CD4-positive, alpha-beta memory T cell (primary cell): ENCODE measurements at regions of chr16 and their contacts with region 1.

Region 1: GRCh38 chr16:4475880-4476788 is at the start of gene HMOX2:
- DNase-seq: peak; percentile 90 to 95 (median 92)
- H3K4me3 ChIP-seq: peak within 1 kb of the TSS; percentile 86 to 91
- H3K4me3 Mint-ChIP-seq: peak within 1 kb of the TSS; percentile 92 to 95 (median 94)
- H3K27ac ChIP-seq: peak within 1 kb of the TSS; percentile 76
- H3K27ac Mint-ChIP-seq: peak within 1 kb of the TSS; percentile 90 to 96 (median 95)
- H3K4me1 ChIP-seq: peaks cover 60% of the 10 kb centered on the region
- H3K4me1 Mint-ChIP-seq: peaks cover 26 to 55% (median 38%) of the 10 kb centered on the region in 4 donors
- H3K27me3 ChIP-seq: no peaks in the 10 kb centered on the region
- H3K27me3 Mint-ChIP-seq: no peaks in the 10 kb centered on the region
- total RNA-seq, gene HMOX2: 64.1 to 72.4 TPM

Region 2: GRCh38 chr16:4360538-4361021 is 115.6 kb before region 1 on chr16:
- CTCF ChIA-PET with region 1: no interaction called
- POLR2A ChIA-PET with region 1: no interaction called
- intact Hi-C with region 1: no loop called
- DNase-seq: peak in 1 of 5 donors; percentile 62
- H3K4me3 ChIP-seq: no peak overlapping the region
- H3K4me3 Mint-ChIP-seq: no peak overlapping the region
- H3K27ac ChIP-seq: no peak overlapping the region
- H3K27ac Mint-ChIP-seq: peak overlapping the region in 3 of 7 donors; percentile 6 to 68 (median 36)
- H3K4me1 ChIP-seq: no peaks in the 10 kb centered on the region
- H3K4me1 Mint-ChIP-seq: peaks cover 0 to 3% (median 0%) of the 10 kb centered on the region in 4 donors
- H3K27me3 ChIP-seq: no peaks in the 10 kb centered on the region
- H3K27me3 Mint-ChIP-seq: no peaks in the 10 kb centered on the region

Region 3: GRCh38 chr16:4416200-4417032 is 59.7 kb before region 1 on chr16 and contains the start of gene CORO7:
- CTCF ChIA-PET with region 1: interaction called, 3 read pairs
- POLR2A ChIA-PET with region 1: interaction called, 54 read pairs
- intact Hi-C with region 1: loop called (anchors 1 kb)
- DNase-seq: peak; percentile 99 to 100 (median 100)
- H3K4me3 ChIP-seq: peak within 1 kb of the TSS; percentile 75 to 81
- H3K4me3 Mint-ChIP-seq: peak within 1 kb of the TSS; percentile 91 to 99 (median 98)
- H3K27ac ChIP-seq: peak within 1 kb of the TSS; percentile 95
- H3K27ac Mint-ChIP-seq: peak within 1 kb of the TSS; percentile 94 to 100 (median 99)
- H3K4me1 ChIP-seq: peaks cover 38% of the 10 kb centered on the region
- H3K4me1 Mint-ChIP-seq: peaks cover 26 to 49% (median 37%) of the 10 kb centered on the region in 4 donors
- H3K27me3 ChIP-seq: no peaks in the 10 kb centered on the region
- H3K27me3 Mint-ChIP-seq: no peaks in the 10 kb centered on the region
- total RNA-seq, gene CORO7: 176 to 184 TPM

Region 4: GRCh38 chr16:4461250-4462085 is 14.7 kb before region 1 on chr16:
- CTCF ChIA-PET with region 1: interaction called, 9 read pairs
- POLR2A ChIA-PET with region 1: interaction called, 78 read pairs
- intact Hi-C with region 1: no loop called
- DNase-seq: no peak
- H3K4me3 ChIP-seq: no peak overlapping the region
- H3K4me3 Mint-ChIP-seq: no peak overlapping the region
- H3K27ac ChIP-seq: no peak overlapping the region
- H3K27ac Mint-ChIP-seq: peak overlapping the region in 4 of 7 donors; percentile 42 to 85 (median 54)
- H3K4me1 ChIP-seq: peaks cover 31% of the 10 kb centered on the region
- H3K4me1 Mint-ChIP-seq: peaks cover 21 to 43% (median 21%) of the 10 kb centered on the region in 4 donors
- H3K27me3 ChIP-seq: no peaks in the 10 kb centered on the region
- H3K27me3 Mint-ChIP-seq: no peaks in the 10 kb centered on the region

Region 5: DNA sequence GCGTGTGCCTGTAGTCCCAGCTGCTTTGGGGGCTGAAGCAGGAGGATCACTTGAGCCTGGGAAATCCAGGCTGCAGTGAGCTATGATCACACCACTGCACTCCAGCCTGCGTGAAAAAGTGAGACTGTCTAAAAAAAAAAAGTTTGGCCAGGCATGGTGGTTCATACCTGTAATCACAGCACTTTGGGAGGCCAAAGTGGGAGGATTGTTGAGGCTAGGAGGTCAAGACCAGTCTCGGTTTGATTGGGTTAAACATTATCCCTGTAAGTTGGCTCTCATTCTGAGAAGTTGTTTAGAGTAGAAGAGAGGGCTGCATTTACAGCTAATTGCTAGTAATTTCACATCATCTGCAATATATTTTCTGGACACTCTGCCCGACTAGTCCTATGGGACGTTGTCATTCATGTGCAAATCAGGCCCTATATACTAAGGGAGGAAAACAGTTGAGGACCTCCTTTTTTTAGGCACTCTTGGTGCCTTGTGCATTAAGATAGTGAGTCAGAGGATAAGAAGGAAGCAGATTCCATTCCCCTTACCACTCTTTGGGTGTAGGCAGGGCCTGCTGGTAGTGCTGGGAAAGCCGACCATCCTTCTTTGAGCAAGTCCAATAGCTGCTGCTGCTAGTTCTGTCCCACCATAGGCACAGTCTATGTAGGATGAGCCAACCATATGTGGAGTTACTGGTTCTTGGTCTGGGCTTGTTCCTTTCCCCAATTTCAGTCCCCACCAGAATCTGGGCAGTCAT is 18.8 kb after region 1 on chr16:
- CTCF ChIA-PET with region 1: interaction called, 343 read pairs
- POLR2A ChIA-PET with region 1: interaction called, 247 read pairs
- intact Hi-C with region 1: no loop called
- DNase-seq: no peak
- H3K4me3 ChIP-seq: no peak overlapping the region
- H3K4me3 Mint-ChIP-seq: peak overlapping the region in 2 of 8 donors; percentile 20 to 44
- H3K27ac ChIP-seq: peak overlapping the region; percentile 13
- H3K27ac Mint-ChIP-seq: peak overlapping the region in 6 of 7 donors; percentile 63 to 83 (median 76)
- H3K4me1 ChIP-seq: peaks cover 84% of the 10 kb centered on the region
- H3K4me1 Mint-ChIP-seq: peaks cover 57 to 86% (median 73%) of the 10 kb centered on the region in 4 donors
- H3K27me3 ChIP-seq: no peaks in the 10 kb centered on the region
- H3K27me3 Mint-ChIP-seq: no peaks in the 10 kb centered on the region

Region 6: DNA sequence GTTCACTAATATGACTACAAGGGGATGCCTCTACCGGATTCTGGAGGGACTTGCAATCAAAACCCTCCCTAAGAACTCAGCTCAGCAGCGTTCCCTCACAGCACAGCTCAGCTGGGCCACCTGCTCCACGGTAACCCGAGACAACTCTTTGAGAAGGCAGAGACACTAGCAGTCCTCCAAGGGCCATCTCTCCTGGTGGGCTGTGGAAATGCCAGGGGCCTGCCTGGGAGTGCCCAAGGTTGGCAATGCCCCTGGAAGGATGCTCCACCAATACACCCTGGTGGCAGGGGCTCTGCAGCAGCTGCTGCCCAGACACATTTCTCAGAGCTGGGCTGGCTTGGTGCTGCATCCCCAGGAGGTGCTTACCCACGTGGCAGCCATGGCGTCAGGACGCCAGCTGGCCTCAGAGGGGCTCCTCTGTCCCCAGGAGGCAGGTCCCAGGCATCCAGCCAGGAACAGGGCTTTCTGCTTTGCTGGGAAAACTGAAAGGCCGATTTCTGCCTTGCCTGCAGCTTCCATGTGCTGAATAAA is 46.0 kb after region 1 on chr16:
- CTCF ChIA-PET with region 1: no interaction called
- POLR2A ChIA-PET with region 1: no interaction called
- intact Hi-C with region 1: no loop called
- DNase-seq: no peak
- H3K4me3 ChIP-seq: no peak overlapping the region
- H3K4me3 Mint-ChIP-seq: no peak overlapping the region
- H3K27ac ChIP-seq: no peak overlapping the region
- H3K27ac Mint-ChIP-seq: peak overlapping the region in 1 of 7 donors; percentile 36
- H3K4me1 ChIP-seq: peaks cover 3% of the 10 kb centered on the region
- H3K4me1 Mint-ChIP-seq: peaks cover 3 to 15% (median 12%) of the 10 kb centered on the region in 4 donors
- H3K27me3 ChIP-seq: no peaks in the 10 kb centered on the region
- H3K27me3 Mint-ChIP-seq: no peaks in the 10 kb centered on the region

Region 7: GRCh38 chr16:4538350-4539235 is 62.5 kb after region 1 on chr16 and contains the start of gene CDIP1:
- CTCF ChIA-PET with region 1: interaction called, 5 read pairs
- POLR2A ChIA-PET with region 1: interaction called, 14 read pairs
- intact Hi-C with region 1: loop called (anchors 1 kb)
- DNase-seq: peak; percentile 89 to 94 (median 90)
- H3K4me3 ChIP-seq: peak within 1 kb of the TSS; percentile 69 to 92
- H3K4me3 Mint-ChIP-seq: peak within 1 kb of the TSS; percentile 82 to 89 (median 84)
- H3K27ac ChIP-seq: peak within 1 kb of the TSS; percentile 77
- H3K27ac Mint-ChIP-seq: peak within 1 kb of the TSS; percentile 89 to 97 (median 94)
- H3K4me1 ChIP-seq: peaks cover 30% of the 10 kb centered on the region
- H3K4me1 Mint-ChIP-seq: peaks cover 18 to 35% (median 27%) of the 10 kb centered on the region in 4 donors
- H3K27me3 ChIP-seq: no peaks in the 10 kb centered on the region
- H3K27me3 Mint-ChIP-seq: no peaks in the 10 kb centered on the region
- total RNA-seq, gene CDIP1: 19.0 to 21.1 TPM

Region 8: DNA sequence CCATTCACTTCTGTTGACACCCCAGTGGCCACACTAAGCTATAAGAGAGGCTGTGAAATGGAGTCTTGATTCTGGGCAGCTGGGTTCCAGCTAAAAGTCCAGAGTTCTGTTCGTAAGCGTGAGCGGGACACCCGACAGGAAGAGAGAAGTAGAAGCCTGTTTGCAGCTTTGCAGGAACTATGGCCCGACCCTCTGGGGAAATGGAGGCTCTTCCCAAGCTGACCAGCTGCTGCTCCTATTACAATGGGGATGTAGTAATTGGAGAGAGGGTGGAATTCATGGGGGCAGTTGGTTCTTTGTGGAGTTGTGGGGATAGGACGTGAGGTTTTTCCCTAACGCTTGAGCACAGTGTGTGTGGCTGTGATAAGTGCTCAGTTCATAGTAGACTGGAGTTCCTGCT is 110.2 kb after region 1 on chr16:
- CTCF ChIA-PET with region 1: interaction called, 11 read pairs
- POLR2A ChIA-PET with region 1: interaction called, 3 read pairs
- intact Hi-C with region 1: no loop called
- DNase-seq: no peak
- H3K4me3 ChIP-seq: no peak overlapping the region
- H3K4me3 Mint-ChIP-seq: no peak overlapping the region
- H3K27ac ChIP-seq: no peak overlapping the region
- H3K27ac Mint-ChIP-seq: no peak overlapping the region
- H3K4me1 ChIP-seq: no peaks in the 10 kb centered on the region
- H3K4me1 Mint-ChIP-seq: peaks cover 0 to 4% (median 3%) of the 10 kb centered on the region in 4 donors
- H3K27me3 ChIP-seq: peaks cover 3% of the 10 kb centered on the region
- H3K27me3 Mint-ChIP-seq: peaks cover 4 to 6% of the 10 kb centered on the region in 2 donors